ENCODE measurements at regions of chr2 and their contacts with region 1.

Region 1: GRCh38 chr2:235595422-235596010 is 101.7 kb downstream of the AGAP1 start:
- DNase-seq: peak; percentile 83
- H3K4me3 ChIP-seq: no peak overlapping the region
- H3K27ac ChIP-seq: no peak overlapping the region
- H3K4me1 ChIP-seq: no peaks in the 10 kb centered on the region
- H3K27me3 ChIP-seq: no peaks in the 10 kb centered on the region
- CTCF ChIP-seq: peak; percentile 88

Region 2: DNA sequence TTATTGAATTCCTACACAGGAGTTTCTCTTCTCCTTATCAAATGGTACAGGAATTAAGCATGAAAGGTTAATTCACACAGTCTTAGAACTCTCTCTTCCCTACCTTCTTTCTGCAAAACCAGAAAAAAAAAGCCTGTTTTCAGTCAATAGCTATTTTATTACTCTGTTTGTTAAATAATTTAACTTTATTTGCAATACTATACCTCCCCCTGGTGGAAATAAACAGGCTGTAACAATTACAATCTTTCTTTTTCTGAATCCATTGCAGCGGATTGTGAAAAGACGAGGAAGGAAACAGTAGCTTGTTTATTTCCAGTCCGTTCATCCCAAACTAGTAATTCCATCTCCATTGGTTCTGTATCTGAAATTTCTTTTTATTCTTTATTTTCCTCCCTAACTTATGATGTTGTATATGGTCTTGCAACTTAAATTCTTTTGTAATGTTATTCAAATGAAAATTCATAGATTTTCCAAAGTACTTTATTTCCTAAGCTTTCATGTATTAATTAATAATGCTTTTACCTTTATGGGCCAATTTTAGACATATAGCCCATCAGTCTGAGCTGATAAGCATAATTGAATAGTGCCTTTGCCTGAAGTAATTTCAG is 478.5 kb before region 1 on chr2:
- CTCF ChIA-PET with region 1: interaction called, 4 read pairs
- POLR2A ChIA-PET with region 1: no interaction called
- intact Hi-C with region 1: loop called (anchors 2 kb)
- DNase-seq: peak; percentile 79
- H3K4me3 ChIP-seq: no peak overlapping the region
- H3K27ac ChIP-seq: no peak overlapping the region
- H3K4me1 ChIP-seq: no peaks in the 10 kb centered on the region
- H3K27me3 ChIP-seq: no peaks in the 10 kb centered on the region
- CTCF ChIP-seq: peak; percentile 74

Region 3: GRCh38 chr2:235493775-235494715 is 101.5 kb before region 1 on chr2 and contains the start of gene AGAP1:
- CTCF ChIA-PET with region 1: no interaction called
- POLR2A ChIA-PET with region 1: no interaction called
- intact Hi-C with region 1: loop called (anchors 5 kb)
- DNase-seq: peak; percentile 93
- H3K4me3 ChIP-seq: peak within 1 kb of the TSS; percentile 75
- H3K27ac ChIP-seq: peak within 1 kb of the TSS; percentile 73
- H3K4me1 ChIP-seq: peaks cover 15% of the 10 kb centered on the region
- H3K27me3 ChIP-seq: no peaks in the 10 kb centered on the region
- CTCF ChIP-seq: no peak
- total RNA-seq, gene AGAP1: 25.3 and 27.5 TPM in 2 replicates

Region 4: DNA sequence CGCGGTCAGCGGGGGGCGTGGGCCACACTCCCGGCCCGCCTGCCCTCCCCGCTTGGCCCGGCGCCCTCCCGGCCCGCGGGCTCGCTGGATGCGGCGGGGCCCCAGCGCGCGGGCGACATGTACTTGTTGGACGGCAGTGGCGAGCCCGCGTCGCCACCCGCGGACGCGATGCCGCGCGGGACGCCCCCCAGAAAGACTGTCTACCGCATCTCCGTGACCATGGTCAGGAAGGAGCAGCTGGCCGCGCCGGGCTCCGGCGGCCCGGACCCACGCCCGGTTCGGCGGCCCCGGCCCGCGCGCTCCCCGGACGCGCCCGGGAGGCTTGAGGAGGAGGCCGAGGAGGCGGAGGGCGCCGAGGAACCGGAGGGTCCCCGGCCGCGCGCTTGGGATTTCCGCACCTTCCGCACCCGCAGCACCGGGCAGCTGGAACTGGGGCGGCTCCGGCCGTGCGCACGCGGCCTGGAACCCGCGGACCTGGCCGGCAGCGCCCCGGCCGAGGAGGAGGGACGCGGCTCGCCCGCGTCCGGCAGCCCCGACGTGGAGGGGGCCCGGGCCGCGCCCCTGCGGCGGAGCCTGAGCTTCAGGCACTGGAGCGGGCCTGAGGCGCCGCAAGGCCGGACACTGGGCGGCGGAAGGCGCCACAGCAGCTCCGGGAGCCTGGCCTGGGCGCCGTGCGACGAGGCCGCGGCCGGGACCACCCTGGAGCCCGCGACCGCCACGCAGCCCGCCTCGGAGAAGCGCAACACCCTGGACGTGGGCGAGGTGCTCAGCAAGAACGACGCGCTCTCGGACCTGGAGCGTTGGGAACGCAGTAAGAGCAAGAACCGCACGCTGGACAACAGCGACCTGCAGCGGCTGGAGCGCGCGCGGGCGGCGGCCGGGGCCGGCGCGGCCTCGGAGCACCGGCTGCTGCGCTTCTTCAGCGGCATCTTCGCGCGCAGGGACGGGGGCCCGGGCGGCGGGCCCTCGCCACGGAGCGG is 74.8 kb after region 1 on chr2:
- CTCF ChIA-PET with region 1: no interaction called
- POLR2A ChIA-PET with region 1: no interaction called
- intact Hi-C with region 1: loop called (anchors 1 kb)
- DNase-seq: peak; percentile 62
- H3K4me3 ChIP-seq: peak overlapping the region; percentile 50
- H3K27ac ChIP-seq: no peak overlapping the region
- H3K4me1 ChIP-seq: peaks cover 15% of the 10 kb centered on the region
- H3K27me3 ChIP-seq: peaks cover 4% of the 10 kb centered on the region
- CTCF ChIP-seq: peak; percentile 43

Measured in A673 (cell line).